Activated CD4-positive, alpha-beta T cell treated with anti-CD3 and anti-CD28 coated beads for 36 hours (primary cell): ENCODE measurements at regions of chr1 and their contacts with region 1.

Region 1: GRCh38 chr1:109307274-109308021 is 637 bp upstream of the MYBPHL start:
- DNase-seq: peak; percentile 33
- ATAC-seq: peak; percentile 76
- H3K4me3 Mint-ChIP-seq: no peak overlapping the region
- H3K27ac Mint-ChIP-seq: no peak overlapping the region
- H3K4me1 Mint-ChIP-seq: no peaks in the 10 kb centered on the region
- H3K27me3 Mint-ChIP-seq: no peaks in the 10 kb centered on the region

Region 2: GRCh38 chr1:109350655-109351054 is 43.2 kb after region 1 on chr1:
- CTCF ChIA-PET with region 1: no interaction called
- POLR2A ChIA-PET with region 1: no interaction called
- intact Hi-C with region 1: loop called (anchors 5 kb)
- DNase-seq: no peak
- ATAC-seq: no peak
- H3K4me3 Mint-ChIP-seq: no peak overlapping the region
- H3K27ac Mint-ChIP-seq: no peak overlapping the region
- H3K4me1 Mint-ChIP-seq: no peaks in the 10 kb centered on the region
- H3K27me3 Mint-ChIP-seq: peaks cover 2% of the 10 kb centered on the region